PC-3 (cell line): ENCODE measurements at regions of chr7 and their contacts with region 1.

Region 1: DNA sequence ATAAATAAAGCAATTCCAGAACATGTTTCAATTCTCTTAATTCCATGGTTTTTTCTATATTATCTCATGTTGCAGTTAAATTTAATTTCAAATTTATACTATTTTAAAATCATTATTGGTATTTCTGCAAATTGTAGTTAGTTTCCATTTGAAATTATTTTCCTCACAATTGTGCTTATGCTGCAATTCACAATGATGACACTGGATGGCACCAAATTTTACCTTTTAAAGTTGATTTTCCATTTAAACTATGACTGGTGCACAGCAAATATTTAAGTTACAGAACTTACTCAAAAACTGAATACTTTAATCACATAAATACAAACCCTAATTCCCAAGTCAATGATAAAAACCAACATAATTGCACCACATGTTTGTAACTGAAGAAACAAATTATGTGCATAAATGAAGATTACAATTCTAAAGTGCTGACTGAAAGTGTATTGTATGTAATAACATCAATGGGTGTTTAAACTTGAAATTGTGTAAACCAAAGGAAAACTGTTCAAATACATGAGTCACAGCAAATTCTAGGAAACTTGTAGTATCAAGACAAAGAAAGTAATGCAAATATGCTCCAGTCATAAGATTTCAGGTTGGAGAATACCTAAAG is 75.3 kb upstream of the AASS start:
- DNase-seq: peak; percentile 63
- ATAC-seq: peak; percentile 46
- H3K4me3 ChIP-seq: no peak overlapping the region
- H3K27ac ChIP-seq: no peak overlapping the region
- H3K4me1 ChIP-seq: peaks cover 11% of the 10 kb centered on the region; the same call in 1 of the 2 replicates
- H3K27me3 ChIP-seq: no peaks in the 10 kb centered on the region
- CTCF ChIP-seq: peak; percentile 70

Region 2: DNA sequence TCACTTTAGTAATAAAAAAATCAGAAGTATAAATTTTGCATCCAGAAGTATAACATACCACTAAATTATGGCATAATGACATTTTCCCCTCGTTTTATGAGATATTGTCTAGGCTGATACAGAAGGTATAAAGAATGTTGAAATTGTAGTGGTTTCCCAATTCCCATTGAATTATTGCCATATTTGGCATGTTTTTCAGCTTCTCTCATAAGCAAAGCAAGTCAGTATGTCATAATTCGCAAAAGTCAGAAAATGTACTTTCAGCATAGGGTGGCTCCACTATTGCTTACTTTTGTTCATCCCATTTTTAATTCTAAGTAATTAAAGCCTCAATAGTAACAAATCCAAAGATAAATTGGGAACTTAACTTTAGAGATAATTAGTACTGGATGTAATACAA is 366.1 kb before region 1 on chr7:
- CTCF ChIA-PET with region 1: no interaction called
- POLR2A ChIA-PET with region 1: no interaction called
- intact Hi-C with region 1: no loop called
- DNase-seq: no peak
- ATAC-seq: no peak
- H3K4me3 ChIP-seq: no peak overlapping the region
- H3K27ac ChIP-seq: no peak overlapping the region
- H3K4me1 ChIP-seq: no peaks in the 10 kb centered on the region
- H3K27me3 ChIP-seq: no peaks in the 10 kb centered on the region
- CTCF ChIP-seq: no peak

Region 3: DNA sequence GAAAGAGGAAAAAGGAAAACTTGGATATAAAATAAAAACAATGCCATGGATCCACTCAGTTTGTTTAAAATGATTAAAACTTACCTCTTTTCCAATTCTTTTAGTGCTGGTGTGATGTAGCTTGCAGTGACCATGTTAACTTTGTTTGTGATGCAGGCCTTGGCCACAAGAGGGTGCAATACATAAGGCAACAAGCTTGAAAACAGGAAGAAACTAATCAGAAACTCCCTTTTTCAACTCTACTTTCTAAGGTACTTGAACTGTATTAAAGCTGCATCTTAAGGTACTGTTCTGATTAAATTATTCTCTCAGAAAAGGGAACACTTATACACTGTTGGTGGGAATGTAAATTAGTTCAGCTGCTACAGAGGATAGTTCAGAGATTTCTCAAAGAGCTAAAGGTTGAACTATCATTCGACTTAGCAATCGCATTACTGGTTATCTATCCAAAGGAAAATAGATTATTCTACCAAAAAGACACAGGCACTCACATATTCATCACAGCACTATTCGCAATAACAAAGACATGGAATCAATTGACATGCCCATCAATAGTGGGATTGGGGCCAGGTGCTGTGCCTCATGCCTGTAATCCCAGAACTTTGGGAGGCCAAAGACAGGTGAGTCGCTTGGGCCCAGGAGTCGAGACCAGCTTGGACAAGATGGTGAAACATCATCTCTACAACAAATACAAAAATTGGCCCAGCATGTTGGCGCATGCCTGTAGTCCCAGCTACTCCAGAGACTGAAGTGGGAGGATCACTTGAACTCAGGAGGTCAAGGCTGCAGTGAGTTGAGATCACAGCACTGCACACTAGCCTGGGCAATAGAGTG is 126.2 kb before region 1 on chr7:
- CTCF ChIA-PET with region 1: no interaction called
- POLR2A ChIA-PET with region 1: no interaction called
- intact Hi-C with region 1: loop called (anchors 1 kb)
- DNase-seq: peak; percentile 71
- ATAC-seq: peak; percentile 50
- H3K4me3 ChIP-seq: no peak overlapping the region
- H3K27ac ChIP-seq: no peak overlapping the region
- H3K4me1 ChIP-seq: no peaks in the 10 kb centered on the region
- H3K27me3 ChIP-seq: no peaks in the 10 kb centered on the region
- CTCF ChIP-seq: peak; percentile 83

Region 4: DNA sequence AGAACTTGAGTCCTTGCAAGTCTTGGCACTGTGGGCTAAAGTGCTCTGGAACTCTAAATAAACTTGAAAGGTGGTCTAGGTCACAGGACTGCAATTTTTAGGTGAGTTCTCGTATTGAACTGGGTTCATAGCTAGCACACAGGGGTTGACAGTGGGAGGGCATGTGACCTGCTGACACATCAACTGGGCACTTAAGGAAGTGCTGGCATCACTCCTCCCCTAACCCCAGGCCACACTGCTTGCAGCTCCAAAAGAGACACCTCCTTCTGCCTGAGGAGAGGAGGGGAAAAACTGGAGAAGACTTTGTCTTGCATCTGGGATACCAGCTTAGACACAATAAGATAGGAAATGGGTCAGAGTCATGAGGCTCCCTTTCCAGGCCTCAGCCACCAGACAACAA is 37.3 kb before region 1 on chr7:
- CTCF ChIA-PET with region 1: no interaction called
- POLR2A ChIA-PET with region 1: no interaction called
- intact Hi-C with region 1: no loop called
- DNase-seq: no peak
- ATAC-seq: no peak
- H3K4me3 ChIP-seq: no peak overlapping the region
- H3K27ac ChIP-seq: no peak overlapping the region
- H3K4me1 ChIP-seq: no peaks in the 10 kb centered on the region
- H3K27me3 ChIP-seq: no peaks in the 10 kb centered on the region
- CTCF ChIP-seq: no peak

Region 5: GRCh38 chr7:122310119-122311021 is 91.0 kb after region 1 on chr7:
- CTCF ChIA-PET with region 1: no interaction called
- POLR2A ChIA-PET with region 1: no interaction called
- intact Hi-C with region 1: no loop called
- DNase-seq: no peak
- ATAC-seq: no peak
- H3K4me3 ChIP-seq: no peak overlapping the region
- H3K27ac ChIP-seq: no peak overlapping the region
- H3K4me1 ChIP-seq: no peaks in the 10 kb centered on the region
- H3K27me3 ChIP-seq: no peaks in the 10 kb centered on the region
- CTCF ChIP-seq: no peak

Region 6: GRCh38 chr7:122790591-122790990 is 571.2 kb after region 1 on chr7:
- CTCF ChIA-PET with region 1: no interaction called
- POLR2A ChIA-PET with region 1: no interaction called
- intact Hi-C with region 1: no loop called
- DNase-seq: no peak
- ATAC-seq: no peak
- H3K4me3 ChIP-seq: no peak overlapping the region
- H3K27ac ChIP-seq: no peak overlapping the region
- H3K4me1 ChIP-seq: no peaks in the 10 kb centered on the region
- H3K27me3 ChIP-seq: no peaks in the 10 kb centered on the region
- CTCF ChIP-seq: no peak